ENCODE measurements at regions of chr21 and their contacts with region 1.

Region 1: DNA sequence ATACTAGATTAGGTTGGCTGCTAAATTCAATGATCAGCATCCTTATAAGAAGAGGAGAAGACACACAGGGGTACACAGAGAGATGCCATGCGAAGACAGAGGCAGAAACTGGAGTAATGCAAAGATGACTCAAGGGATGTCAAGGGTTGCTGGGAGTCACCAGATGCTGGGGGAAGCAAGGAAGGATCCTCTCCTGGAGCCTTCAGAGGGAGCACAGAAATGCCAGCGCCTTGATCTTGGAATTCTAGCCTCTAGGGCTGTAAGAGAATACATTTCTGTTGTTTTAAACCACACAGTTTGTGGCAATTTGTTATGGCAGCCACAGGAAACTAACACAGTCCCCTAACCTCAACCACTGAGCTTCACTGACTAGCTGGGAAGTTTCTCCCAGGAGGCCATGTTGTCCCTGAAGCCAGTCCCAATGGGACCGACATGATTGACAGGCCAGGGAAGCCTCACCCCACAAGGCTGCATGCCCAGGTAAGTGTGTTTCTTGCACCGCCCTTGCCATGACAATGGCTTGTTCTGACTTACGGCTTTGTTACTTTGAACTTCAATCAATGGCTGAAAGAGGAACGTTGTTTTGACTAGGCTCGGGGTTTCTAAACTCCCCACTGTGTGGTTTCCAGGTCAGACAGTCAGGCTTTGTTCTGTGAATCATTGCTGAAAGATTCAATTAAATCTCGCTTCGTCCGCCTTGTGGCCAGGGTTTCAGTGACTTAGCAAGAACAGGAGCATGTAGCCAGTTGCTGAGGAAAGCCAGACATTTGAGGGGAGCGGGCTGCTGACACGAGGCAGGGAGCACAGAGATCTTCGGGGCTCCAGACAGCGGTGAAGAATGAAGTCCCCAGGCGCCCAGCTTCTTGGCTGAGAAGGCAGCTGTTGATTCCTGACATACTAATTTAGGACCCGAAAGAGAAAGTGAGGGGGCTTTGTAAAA is 62.3 kb downstream of the RUNX1 start:
- DNase-seq: peak in 8 of 9 donors; percentile 52 to 74 (median 67)
- ATAC-seq: peak; percentile 83
- H3K4me3 ChIP-seq: peak overlapping the region; percentile 26
- H3K4me3 Mint-ChIP-seq: peak overlapping the region; percentile 70 to 91 (median 81)
- H3K27ac ChIP-seq: peak overlapping the region; percentile 61
- H3K27ac Mint-ChIP-seq: peak overlapping the region; percentile 82 to 98 (median 94)
- H3K4me1 ChIP-seq: peaks cover 82 to 86% of the 10 kb centered on the region in 2 donors
- H3K4me1 Mint-ChIP-seq: peaks cover 6 to 97% (median 87%) of the 10 kb centered on the region in 7 donors
- H3K27me3 ChIP-seq: no peaks in the 10 kb centered on the region
- H3K27me3 Mint-ChIP-seq: peaks cover 0 to 5% (median 0%) of the 10 kb centered on the region in 5 donors

Region 2: DNA sequence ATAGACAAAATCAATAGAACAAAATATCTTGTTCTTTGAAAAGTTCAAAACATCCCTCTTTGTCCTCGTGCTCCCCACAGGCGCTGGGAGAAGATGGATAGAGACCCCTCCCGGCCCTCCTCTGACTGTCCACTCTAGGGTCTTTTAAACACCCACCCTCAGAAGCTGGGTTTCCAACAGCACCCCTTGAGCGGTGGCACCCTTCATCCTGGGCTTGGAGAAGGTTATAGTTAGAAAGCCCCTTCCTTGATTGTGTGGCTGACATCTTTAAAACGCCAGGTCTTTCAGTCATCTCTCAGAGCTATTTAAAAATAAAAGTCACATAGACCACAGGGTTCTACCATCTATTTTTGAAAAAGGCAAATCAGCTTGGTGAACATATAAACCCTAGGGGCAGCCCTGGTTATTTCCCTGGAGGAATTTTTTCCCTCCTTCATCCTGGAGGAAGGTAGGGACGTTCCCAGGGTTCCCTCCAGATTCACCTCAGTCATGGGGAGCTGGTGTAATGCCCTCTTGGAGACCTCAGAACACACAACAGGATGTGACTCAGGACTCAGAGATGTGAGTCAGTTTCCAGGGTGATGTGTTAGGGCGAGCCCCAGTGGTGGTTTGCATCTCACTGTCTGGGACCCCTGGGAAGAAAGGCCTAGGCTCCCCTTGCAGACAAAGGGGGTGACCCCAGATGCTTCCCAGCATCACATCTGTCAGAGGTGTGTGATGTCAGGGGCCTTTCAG is 179.5 kb before region 1 on chr21:
- CTCF ChIA-PET with region 1: no interaction called
- POLR2A ChIA-PET with region 1: no interaction called
- intact Hi-C with region 1: loop called in 1 of 2 experiments (anchors 10 kb)
- DNase-seq: peak in 2 of 9 donors; percentile 32 to 64
- ATAC-seq: peak; percentile 88
- H3K4me3 ChIP-seq: no peak overlapping the region
- H3K4me3 Mint-ChIP-seq: peak overlapping the region in 3 of 10 donors; percentile 18 to 52 (median 33)
- H3K27ac ChIP-seq: peak overlapping the region; percentile 36
- H3K27ac Mint-ChIP-seq: peak overlapping the region; percentile 28 to 91 (median 81)
- H3K4me1 ChIP-seq: peaks cover 25 to 49% of the 10 kb centered on the region in 2 donors
- H3K4me1 Mint-ChIP-seq: peaks cover 38 to 89% (median 82%) of the 10 kb centered on the region in 7 donors
- H3K27me3 ChIP-seq: no peaks in the 10 kb centered on the region
- H3K27me3 Mint-ChIP-seq: no peaks in the 10 kb centered on the region

Region 3: GRCh38 chr21:34967509-34968289 is 19.1 kb before region 1 on chr21:
- CTCF ChIA-PET with region 1: interaction called, 4 read pairs
- POLR2A ChIA-PET with region 1: interaction called, 4 read pairs
- intact Hi-C with region 1: loop called in 1 of 2 experiments (anchors 2 kb)
- DNase-seq: peak in 1 of 9 donors; percentile 30
- ATAC-seq: peak; percentile 60
- H3K4me3 ChIP-seq: no peak overlapping the region
- H3K4me3 Mint-ChIP-seq: peak overlapping the region in 9 of 10 donors; percentile 18 to 82 (median 69)
- H3K27ac ChIP-seq: no peak overlapping the region
- H3K27ac Mint-ChIP-seq: peak overlapping the region; percentile 65 to 93 (median 85)
- H3K4me1 ChIP-seq: peaks cover 31 to 75% of the 10 kb centered on the region in 2 donors
- H3K4me1 Mint-ChIP-seq: peaks cover 78 to 100% (median 96%) of the 10 kb centered on the region in 7 donors
- H3K27me3 ChIP-seq: no peaks in the 10 kb centered on the region
- H3K27me3 Mint-ChIP-seq: peaks cover 0 to 8% (median 0%) of the 10 kb centered on the region in 5 donors

Region 4: GRCh38 chr21:35005560-35006224 is 18.9 kb after region 1 on chr21:
- CTCF ChIA-PET with region 1: no interaction called
- POLR2A ChIA-PET with region 1: interaction called, 6 read pairs
- intact Hi-C with region 1: loop called in 1 of 2 experiments (anchors 2 kb)
- DNase-seq: no peak
- ATAC-seq: no peak
- H3K4me3 ChIP-seq: no peak overlapping the region
- H3K4me3 Mint-ChIP-seq: peak overlapping the region in 9 of 10 donors; percentile 0 to 71 (median 48)
- H3K27ac ChIP-seq: no peak overlapping the region
- H3K27ac Mint-ChIP-seq: peak overlapping the region in 8 of 9 donors; percentile 4 to 84 (median 74)
- H3K4me1 ChIP-seq: peaks cover 35 to 55% of the 10 kb centered on the region in 2 donors
- H3K4me1 Mint-ChIP-seq: peaks cover 61 to 99% (median 98%) of the 10 kb centered on the region in 7 donors
- H3K27me3 ChIP-seq: no peaks in the 10 kb centered on the region
- H3K27me3 Mint-ChIP-seq: no peaks in the 10 kb centered on the region

Region 5: DNA sequence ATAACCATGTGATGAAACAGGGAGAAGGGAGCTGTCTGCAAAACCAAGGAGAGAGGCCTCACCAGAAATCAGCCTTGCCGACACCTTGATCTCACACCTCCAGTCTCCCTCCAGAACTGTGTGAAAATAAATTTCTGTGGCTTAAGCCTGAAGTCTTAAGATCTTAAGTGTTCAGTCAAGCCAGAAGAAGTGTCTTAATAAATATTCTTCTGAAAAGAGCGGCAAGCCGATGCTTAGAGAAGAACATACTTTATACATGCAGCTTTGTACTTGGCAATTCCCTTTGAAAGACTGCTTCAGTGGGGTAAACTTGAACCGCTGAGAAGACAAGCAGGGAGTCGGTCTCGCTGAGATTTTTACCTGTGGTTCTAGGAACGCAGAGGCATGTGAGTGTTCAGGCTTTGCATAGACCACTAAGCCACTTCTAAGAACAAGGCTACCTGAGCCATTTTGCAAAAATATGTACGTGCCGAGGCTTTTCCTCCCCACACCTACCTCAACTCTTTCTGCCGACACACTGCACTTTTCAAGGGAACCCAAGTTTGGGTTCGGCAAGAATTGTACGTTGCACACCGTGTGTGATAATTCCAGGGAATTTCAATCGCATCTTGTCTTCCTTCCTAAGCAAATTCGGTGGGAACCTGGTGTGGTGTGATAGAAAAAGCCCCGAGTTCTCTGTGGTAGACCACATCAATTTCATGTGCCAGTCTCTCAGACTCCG is 58.9 kb after region 1 on chr21:
- CTCF ChIA-PET with region 1: interaction called, 8 read pairs
- POLR2A ChIA-PET with region 1: interaction called, 32 read pairs
- intact Hi-C with region 1: loop called (anchors 1 kb)
- DNase-seq: peak in 7 of 9 donors; percentile 77 to 89 (median 85)
- ATAC-seq: peak; percentile 55
- H3K4me3 ChIP-seq: peak overlapping the region; percentile 76
- H3K4me3 Mint-ChIP-seq: peak overlapping the region; percentile 90 to 99 (median 97)
- H3K27ac ChIP-seq: peak overlapping the region; percentile 77
- H3K27ac Mint-ChIP-seq: peak overlapping the region; percentile 93 to 100 (median 98)
- H3K4me1 ChIP-seq: peaks cover 63 to 65% of the 10 kb centered on the region in 2 donors
- H3K4me1 Mint-ChIP-seq: peaks cover 58 to 90% (median 72%) of the 10 kb centered on the region in 7 donors
- H3K27me3 ChIP-seq: no peaks in the 10 kb centered on the region
- H3K27me3 Mint-ChIP-seq: peaks cover 0 to 3% (median 0%) of the 10 kb centered on the region in 5 donors

Region 6: GRCh38 chr21:35059742-35060141 is 72.9 kb after region 1 on chr21:
- CTCF ChIA-PET with region 1: no interaction called
- POLR2A ChIA-PET with region 1: no interaction called
- intact Hi-C with region 1: no loop called
- DNase-seq: no peak
- ATAC-seq: no peak
- H3K4me3 ChIP-seq: no peak overlapping the region
- H3K4me3 Mint-ChIP-seq: no peak overlapping the region
- H3K27ac ChIP-seq: no peak overlapping the region
- H3K27ac Mint-ChIP-seq: peak overlapping the region in 1 of 9 donors; percentile 59
- H3K4me1 ChIP-seq: no peaks in the 10 kb centered on the region
- H3K4me1 Mint-ChIP-seq: peaks cover 6 to 36% (median 13%) of the 10 kb centered on the region in 7 donors
- H3K27me3 ChIP-seq: no peaks in the 10 kb centered on the region
- H3K27me3 Mint-ChIP-seq: peaks cover 0 to 9% (median 0%) of the 10 kb centered on the region in 5 donors